B cell (primary cell): ENCODE measurements at regions of chr6 and their contacts with region 1.

Region 1: GRCh38 chr6:5143634-5144311 is 58.6 kb downstream of the PPP1R3G start:
- DNase-seq: peak; percentile 85
- ATAC-seq: peak; percentile 70
- H3K4me3 ChIP-seq: no peak overlapping the region
- H3K4me3 Mint-ChIP-seq: no peak overlapping the region
- H3K27ac ChIP-seq: no peak overlapping the region
- H3K27ac Mint-ChIP-seq: no peak overlapping the region
- H3K4me1 ChIP-seq: peaks cover 10 to 22% of the 10 kb centered on the region in 2 donors
- H3K4me1 Mint-ChIP-seq: peaks cover 25% of the 10 kb centered on the region
- H3K27me3 ChIP-seq: no peaks in the 10 kb centered on the region
- H3K27me3 Mint-ChIP-seq: no peaks in the 10 kb centered on the region
- CTCF ChIP-seq: peak; percentile 96

Region 2: GRCh38 chr6:5053038-5053437 is 90.7 kb before region 1 on chr6:
- CTCF ChIA-PET with region 1: no interaction called
- POLR2A ChIA-PET with region 1: no interaction called
- intact Hi-C with region 1: loop called (anchors 1 kb)
- DNase-seq: no peak
- ATAC-seq: no peak
- H3K4me3 ChIP-seq: no peak overlapping the region
- H3K4me3 Mint-ChIP-seq: no peak overlapping the region
- H3K27ac ChIP-seq: no peak overlapping the region
- H3K27ac Mint-ChIP-seq: no peak overlapping the region
- H3K4me1 ChIP-seq: no peaks in the 10 kb centered on the region
- H3K4me1 Mint-ChIP-seq: no peaks in the 10 kb centered on the region
- H3K27me3 ChIP-seq: no peaks in the 10 kb centered on the region
- H3K27me3 Mint-ChIP-seq: no peaks in the 10 kb centered on the region
- CTCF ChIP-seq: no peak

Region 3: GRCh38 chr6:5278047-5278446 is 134.3 kb after region 1 on chr6:
- CTCF ChIA-PET with region 1: interaction called, 11 read pairs
- POLR2A ChIA-PET with region 1: no interaction called
- intact Hi-C with region 1: no loop called
- DNase-seq: peak; percentile 39
- ATAC-seq: peak; percentile 86
- H3K4me3 ChIP-seq: peak overlapping the region in 2 of 5 experiments; percentile 1 to 2
- H3K4me3 Mint-ChIP-seq: peak overlapping the region; percentile 90
- H3K27ac ChIP-seq: peak overlapping the region; percentile 8 to 31
- H3K27ac Mint-ChIP-seq: peak overlapping the region; percentile 93
- H3K4me1 ChIP-seq: peaks cover 15 to 20% of the 10 kb centered on the region in 2 donors
- H3K4me1 Mint-ChIP-seq: peaks cover 56% of the 10 kb centered on the region
- H3K27me3 ChIP-seq: no peaks in the 10 kb centered on the region
- H3K27me3 Mint-ChIP-seq: no peaks in the 10 kb centered on the region
- CTCF ChIP-seq: no peak

Region 4: DNA sequence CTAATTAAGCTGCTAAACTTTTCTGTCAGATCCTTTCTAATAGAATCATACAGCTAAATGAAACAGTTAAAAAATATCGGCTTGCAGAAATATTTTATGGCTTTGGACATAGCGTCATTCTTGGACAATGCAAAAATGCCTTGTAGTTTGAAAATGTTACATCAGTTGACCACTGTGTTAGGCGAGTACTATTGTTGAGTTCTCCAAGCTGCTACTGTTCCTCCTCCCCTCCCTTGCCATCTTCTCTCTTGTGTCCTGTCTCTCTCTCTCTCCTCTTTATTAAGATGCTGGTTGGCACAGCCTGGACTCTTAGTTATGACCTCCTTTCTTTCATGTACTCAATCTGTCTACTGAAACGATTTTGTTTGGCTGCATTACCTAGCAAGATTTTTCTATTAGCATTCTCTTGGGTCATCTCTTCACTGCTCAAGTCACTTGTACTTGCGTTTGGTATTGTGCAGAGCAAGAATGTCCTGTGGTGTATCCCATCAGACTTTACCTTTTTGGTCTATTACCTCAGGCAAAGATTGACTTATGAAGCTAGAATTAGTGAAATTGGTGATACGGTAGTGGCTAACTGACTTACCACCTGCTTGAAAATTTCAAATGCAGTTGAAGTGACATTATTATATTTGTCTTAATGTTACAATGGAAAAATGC is 245.4 kb after region 1 on chr6:
- CTCF ChIA-PET with region 1: interaction called, 15 read pairs
- POLR2A ChIA-PET with region 1: no interaction called
- intact Hi-C with region 1: no loop called
- DNase-seq: no peak
- ATAC-seq: no peak
- H3K4me3 ChIP-seq: no peak overlapping the region
- H3K4me3 Mint-ChIP-seq: no peak overlapping the region
- H3K27ac ChIP-seq: no peak overlapping the region
- H3K27ac Mint-ChIP-seq: no peak overlapping the region
- H3K4me1 ChIP-seq: no peaks in the 10 kb centered on the region
- H3K4me1 Mint-ChIP-seq: no peaks in the 10 kb centered on the region
- H3K27me3 ChIP-seq: no peaks in the 10 kb centered on the region
- H3K27me3 Mint-ChIP-seq: no peaks in the 10 kb centered on the region
- CTCF ChIP-seq: no peak